GM12878 (cell line): ENCODE measurements at regions of chr4 and their contacts with region 1.

Region 1: GRCh38 chr4:78749972-78750727 is 26.0 kb upstream of the BMP2K start:
- DNase-seq: peak; percentile 97
- ATAC-seq: peak; percentile 93
- H3K4me3 ChIP-seq: no peak overlapping the region
- H3K27ac ChIP-seq: peak overlapping the region; percentile 66
- H3K4me1 ChIP-seq: peaks cover 42% of the 10 kb centered on the region
- H3K27me3 ChIP-seq: no peaks in the 10 kb centered on the region
- CTCF ChIP-seq: no peak
- EP300 ChIP-seq: peak; percentile 93 to 97
- POLR2A ChIP-seq: no peak
- RAD21 ChIP-seq: no peak

Region 2: GRCh38 chr4:78629991-78630541 is 120.1 kb before region 1 on chr4:
- CTCF ChIA-PET with region 1: interaction called, 8 read pairs
- POLR2A ChIA-PET with region 1: no interaction called
- RAD21 ChIA-PET with region 1: interaction called, 22 read pairs
- SMC1A ChIA-PET with region 1: interaction called, 13 read pairs
- in situ Hi-C with region 1: no loop called
- intact Hi-C with region 1: no loop called
- DNase-seq: no peak
- ATAC-seq: peak; percentile 27
- H3K4me3 ChIP-seq: no peak overlapping the region
- H3K27ac ChIP-seq: no peak overlapping the region
- H3K4me1 ChIP-seq: peaks cover 39% of the 10 kb centered on the region
- H3K27me3 ChIP-seq: no peaks in the 10 kb centered on the region
- CTCF ChIP-seq: no peak
- EP300 ChIP-seq: no peak
- POLR2A ChIP-seq: no peak
- RAD21 ChIP-seq: no peak

Region 3: DNA sequence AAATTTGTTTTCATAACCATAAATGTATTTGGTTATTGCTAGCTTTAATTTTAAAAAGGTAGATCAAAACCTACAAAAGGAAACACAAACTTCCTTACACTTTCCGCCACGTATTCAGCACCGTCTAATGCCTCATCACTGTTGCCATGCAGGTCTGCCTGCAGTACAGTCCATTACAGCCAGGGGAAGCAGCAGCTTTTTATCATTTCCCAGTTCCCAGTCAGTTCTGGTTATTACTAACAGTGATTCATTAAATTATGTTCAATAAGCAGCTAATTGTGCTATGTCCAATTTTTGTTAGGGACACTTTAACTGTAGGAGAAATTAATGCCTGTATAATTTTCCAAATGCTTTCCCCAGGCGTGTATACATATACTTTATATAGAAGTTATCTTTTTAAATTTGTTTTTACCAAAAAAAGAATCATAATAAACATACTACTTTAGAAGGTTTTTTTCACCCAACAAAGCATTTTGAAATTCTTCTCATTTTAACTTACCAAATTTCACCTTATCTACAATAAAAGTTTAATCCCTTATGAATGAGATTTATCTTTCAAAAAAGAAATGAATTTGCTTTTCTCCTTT is 105.3 kb before region 1 on chr4:
- CTCF ChIA-PET with region 1: interaction called, 19 read pairs
- POLR2A ChIA-PET with region 1: interaction called, 4 read pairs
- RAD21 ChIA-PET with region 1: interaction called, 4 read pairs
- SMC1A ChIA-PET with region 1: interaction called, 32 read pairs
- in situ Hi-C with region 1: no loop called
- intact Hi-C with region 1: loop called (anchors 2 kb)
- DNase-seq: no peak
- ATAC-seq: peak; percentile 92
- H3K4me3 ChIP-seq: no peak overlapping the region
- H3K27ac ChIP-seq: no peak overlapping the region
- H3K4me1 ChIP-seq: peaks cover 29% of the 10 kb centered on the region
- H3K27me3 ChIP-seq: no peaks in the 10 kb centered on the region
- CTCF ChIP-seq: peak; percentile 78 to 92 (median 92)
- EP300 ChIP-seq: no peak
- POLR2A ChIP-seq: no peak
- RAD21 ChIP-seq: peak; percentile 87

Region 4: DNA sequence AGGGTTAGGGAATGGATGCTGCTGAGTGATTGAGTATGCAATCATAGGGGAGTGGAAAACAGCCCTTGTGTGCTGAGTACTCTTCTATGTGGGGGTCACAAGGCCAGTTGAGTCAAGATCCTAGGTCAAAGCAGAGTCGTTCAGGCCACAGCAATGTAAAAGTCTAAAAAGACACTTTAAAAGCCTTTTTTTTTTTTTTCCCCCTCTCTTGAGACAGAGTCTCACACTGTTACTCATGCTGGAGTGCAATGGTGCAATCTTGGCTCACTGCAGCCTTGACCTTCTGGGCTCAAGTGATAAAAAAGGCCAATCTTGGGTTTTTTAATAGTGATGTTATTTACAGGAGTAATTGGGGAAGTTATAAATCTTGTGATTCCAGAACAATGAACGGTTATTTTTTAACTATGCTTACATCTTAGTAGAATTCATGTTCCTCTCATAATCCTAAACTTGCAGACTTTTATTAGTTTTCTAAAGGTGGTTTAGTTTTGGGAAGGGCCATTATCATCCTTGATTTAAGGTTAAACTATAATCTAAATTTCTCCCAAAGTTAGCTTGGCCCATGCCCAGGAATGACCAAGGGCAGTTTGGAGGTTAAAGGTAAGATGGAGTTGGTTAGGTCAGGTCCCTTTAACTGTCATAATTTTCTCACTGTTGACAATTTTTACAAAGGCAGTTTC is 56.2 kb before region 1 on chr4:
- CTCF ChIA-PET with region 1: no interaction called
- POLR2A ChIA-PET with region 1: no interaction called
- RAD21 ChIA-PET with region 1: no interaction called
- SMC1A ChIA-PET with region 1: no interaction called
- in situ Hi-C with region 1: no loop called
- intact Hi-C with region 1: no loop called
- DNase-seq: no peak
- ATAC-seq: no peak
- H3K4me3 ChIP-seq: no peak overlapping the region
- H3K27ac ChIP-seq: no peak overlapping the region
- H3K4me1 ChIP-seq: 0 out of 2 replicates have a peak, but pooled peaks cover 5% of the 10 kb centered on the region
- H3K27me3 ChIP-seq: no peaks in the 10 kb centered on the region
- CTCF ChIP-seq: no peak
- EP300 ChIP-seq: no peak
- POLR2A ChIP-seq: no peak
- RAD21 ChIP-seq: no peak

Region 5: DNA sequence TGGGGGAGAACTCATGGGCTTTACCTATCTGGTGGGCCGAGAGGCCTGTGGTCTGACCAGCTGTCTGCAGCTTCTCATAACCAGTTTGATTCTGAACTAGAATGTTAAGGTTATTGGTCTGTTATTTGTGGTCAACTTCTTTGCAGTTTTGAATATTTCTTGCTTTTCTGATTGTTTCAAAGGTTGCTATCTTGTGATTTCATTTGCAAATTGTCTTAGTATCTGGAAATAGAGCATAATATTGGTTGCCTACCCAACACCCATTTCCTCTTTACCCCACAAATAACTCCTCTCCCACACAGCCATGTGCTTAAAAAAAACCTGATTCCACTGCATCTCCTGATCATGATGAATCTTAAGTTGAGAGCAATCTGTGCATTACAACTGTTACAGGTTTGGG is 13.1 kb before region 1 on chr4:
- CTCF ChIA-PET with region 1: interaction called, 5 read pairs
- POLR2A ChIA-PET with region 1: interaction called, 4 read pairs
- RAD21 ChIA-PET with region 1: interaction called, 5 read pairs
- SMC1A ChIA-PET with region 1: interaction called, 15 read pairs
- in situ Hi-C with region 1: no loop called
- intact Hi-C with region 1: no loop called
- DNase-seq: peak; percentile 26
- ATAC-seq: peak; percentile 69
- H3K4me3 ChIP-seq: no peak overlapping the region
- H3K27ac ChIP-seq: no peak overlapping the region
- H3K4me1 ChIP-seq: peaks cover 33% of the 10 kb centered on the region
- H3K27me3 ChIP-seq: no peaks in the 10 kb centered on the region
- CTCF ChIP-seq: no peak
- EP300 ChIP-seq: peak in 1 of 2 experiments; percentile 64; a peak in 2 of 4 replicates
- POLR2A ChIP-seq: no peak
- RAD21 ChIP-seq: no peak

Region 6: DNA sequence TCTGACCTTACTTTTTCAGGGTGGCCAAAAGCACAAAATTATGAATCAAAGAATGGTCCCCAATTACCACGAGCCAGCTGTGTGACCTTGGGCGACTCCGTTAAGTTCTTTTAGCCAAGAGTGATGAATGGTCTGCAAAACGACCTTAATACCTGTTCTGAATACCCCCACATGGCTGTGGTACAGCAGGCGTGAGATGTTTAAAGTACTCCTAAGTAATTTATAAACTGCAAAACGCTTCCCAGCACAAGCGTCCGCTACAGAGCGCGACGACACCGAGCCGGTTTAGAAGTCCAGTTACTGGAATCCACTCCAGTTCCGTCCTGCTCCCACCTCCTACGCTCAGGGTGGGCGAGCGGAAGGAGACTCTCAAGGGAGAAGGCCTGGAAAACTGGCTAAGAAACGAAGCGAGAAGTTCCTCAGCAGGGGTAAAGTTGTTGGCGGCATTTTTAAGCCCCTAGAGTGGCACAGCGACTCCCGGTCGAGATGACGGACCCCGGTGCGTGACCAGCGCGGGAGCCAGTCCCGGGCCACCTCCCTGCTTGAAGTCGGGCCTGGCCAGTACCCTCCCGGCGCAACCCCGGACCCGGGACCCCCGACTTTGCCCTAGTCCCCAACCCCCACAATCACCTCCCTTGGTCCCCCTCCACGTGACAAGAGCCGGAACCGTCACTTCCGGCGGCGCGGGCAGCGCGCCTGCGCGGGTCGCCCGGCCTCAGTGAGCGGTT is 25.3 kb after region 1 on chr4:
- CTCF ChIA-PET with region 1: interaction called, 3 read pairs
- POLR2A ChIA-PET with region 1: interaction called, 5 read pairs
- RAD21 ChIA-PET with region 1: interaction called, 9 read pairs
- SMC1A ChIA-PET with region 1: interaction called, 28 read pairs
- in situ Hi-C with region 1: no loop called
- intact Hi-C with region 1: loop called (anchors 1 kb)
- DNase-seq: no peak
- ATAC-seq: peak; percentile 65
- H3K4me3 ChIP-seq: peak overlapping the region; percentile 99
- H3K27ac ChIP-seq: peak overlapping the region; percentile 80
- H3K4me1 ChIP-seq: peaks cover 20% of the 10 kb centered on the region
- H3K27me3 ChIP-seq: no peaks in the 10 kb centered on the region
- CTCF ChIP-seq: no peak
- EP300 ChIP-seq: peak in 1 of 2 experiments; percentile 58; a peak in 1 of 4 replicates
- POLR2A ChIP-seq: no peak
- RAD21 ChIP-seq: no peak

Region 7: GRCh38 chr4:78951862-78952472 is 201.8 kb after region 1 on chr4:
- CTCF ChIA-PET with region 1: no interaction called
- POLR2A ChIA-PET with region 1: no interaction called
- RAD21 ChIA-PET with region 1: no interaction called
- SMC1A ChIA-PET with region 1: no interaction called
- in situ Hi-C with region 1: no loop called
- intact Hi-C with region 1: no loop called
- DNase-seq: no peak
- ATAC-seq: peak; percentile 88
- H3K4me3 ChIP-seq: no peak overlapping the region
- H3K27ac ChIP-seq: no peak overlapping the region
- H3K4me1 ChIP-seq: no peaks in the 10 kb centered on the region
- H3K27me3 ChIP-seq: no peaks in the 10 kb centered on the region
- CTCF ChIP-seq: peak; percentile 54 to 84 (median 62)
- EP300 ChIP-seq: no peak
- POLR2A ChIP-seq: no peak
- RAD21 ChIP-seq: peak; percentile 89